ENCODE measurements at regions of chr1 and their contacts with region 1.

Region 1: GRCh38 chr1:31955917-31956736 is 18.0 kb upstream of the PTP4A2 start:
- DNase-seq: peak; percentile 94
- H3K4me3 Mint-ChIP-seq: peak overlapping the region; percentile 55
- H3K27ac Mint-ChIP-seq: peak overlapping the region; percentile 90
- H3K4me1 Mint-ChIP-seq: peaks cover 59% of the 10 kb centered on the region
- H3K27me3 Mint-ChIP-seq: no peaks in the 10 kb centered on the region

Region 2: DNA sequence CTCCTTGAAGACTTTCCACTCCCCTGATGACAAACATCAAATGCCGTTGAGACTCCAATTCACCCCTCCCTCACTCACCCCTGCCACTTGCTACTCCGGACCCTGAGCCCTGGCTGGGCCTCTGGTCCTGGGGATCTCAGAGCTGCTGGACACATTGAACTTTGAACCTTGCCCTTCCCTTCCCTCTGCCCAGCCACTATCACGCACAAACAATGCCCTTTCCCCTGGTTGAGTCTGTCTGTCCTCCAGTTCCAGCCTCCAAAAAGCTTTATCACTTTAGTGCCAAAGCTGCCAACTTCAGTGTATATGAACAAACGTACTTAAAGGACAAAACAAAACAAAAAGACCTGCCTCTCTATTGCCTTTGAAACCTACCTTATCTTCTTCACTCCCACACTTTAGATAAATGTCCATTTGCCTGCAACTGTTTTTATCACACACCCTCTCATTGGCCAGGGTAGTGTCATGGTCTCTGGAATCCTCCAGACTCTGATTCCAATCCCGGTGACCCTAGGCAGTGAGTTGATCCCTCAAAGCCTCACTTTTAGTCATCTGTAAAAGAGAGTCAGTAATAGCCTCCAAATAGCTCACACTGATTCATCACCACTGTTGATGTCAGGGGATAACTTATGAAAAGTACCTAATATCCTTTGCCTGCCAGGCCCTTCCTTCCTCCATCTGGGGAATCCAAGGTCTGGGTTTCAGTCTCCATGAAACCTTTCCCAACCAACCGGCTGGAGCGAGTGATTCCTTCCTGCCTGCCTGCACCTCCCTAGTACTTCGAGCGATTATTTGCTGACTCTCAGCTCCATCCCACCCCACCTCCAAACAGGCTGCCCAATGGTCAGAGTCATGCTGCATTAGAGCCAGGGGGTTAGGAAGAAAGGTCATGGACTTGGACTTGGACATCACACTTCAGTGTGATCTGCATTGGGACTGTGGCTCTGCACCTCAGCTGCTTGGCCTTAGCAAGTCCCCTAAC is 124.4 kb before region 1 on chr1:
- CTCF ChIA-PET with region 1: no interaction called
- POLR2A ChIA-PET with region 1: no interaction called
- intact Hi-C with region 1: loop called (anchors 5 kb)
- DNase-seq: no peak
- H3K4me3 Mint-ChIP-seq: no peak overlapping the region
- H3K27ac Mint-ChIP-seq: no peak overlapping the region
- H3K4me1 Mint-ChIP-seq: peaks cover 17% of the 10 kb centered on the region
- H3K27me3 Mint-ChIP-seq: no peaks in the 10 kb centered on the region

Region 3: GRCh38 chr1:31910933-31911332 is 45.2 kb before region 1 on chr1:
- CTCF ChIA-PET with region 1: interaction called, 9 read pairs
- POLR2A ChIA-PET with region 1: interaction called, 6 read pairs
- intact Hi-C with region 1: loop called (anchors 1 kb)
- DNase-seq: peak; percentile 49
- H3K4me3 Mint-ChIP-seq: no peak overlapping the region
- H3K27ac Mint-ChIP-seq: peak overlapping the region; percentile 69
- H3K4me1 Mint-ChIP-seq: peaks cover 51% of the 10 kb centered on the region
- H3K27me3 Mint-ChIP-seq: no peaks in the 10 kb centered on the region

Region 4: DNA sequence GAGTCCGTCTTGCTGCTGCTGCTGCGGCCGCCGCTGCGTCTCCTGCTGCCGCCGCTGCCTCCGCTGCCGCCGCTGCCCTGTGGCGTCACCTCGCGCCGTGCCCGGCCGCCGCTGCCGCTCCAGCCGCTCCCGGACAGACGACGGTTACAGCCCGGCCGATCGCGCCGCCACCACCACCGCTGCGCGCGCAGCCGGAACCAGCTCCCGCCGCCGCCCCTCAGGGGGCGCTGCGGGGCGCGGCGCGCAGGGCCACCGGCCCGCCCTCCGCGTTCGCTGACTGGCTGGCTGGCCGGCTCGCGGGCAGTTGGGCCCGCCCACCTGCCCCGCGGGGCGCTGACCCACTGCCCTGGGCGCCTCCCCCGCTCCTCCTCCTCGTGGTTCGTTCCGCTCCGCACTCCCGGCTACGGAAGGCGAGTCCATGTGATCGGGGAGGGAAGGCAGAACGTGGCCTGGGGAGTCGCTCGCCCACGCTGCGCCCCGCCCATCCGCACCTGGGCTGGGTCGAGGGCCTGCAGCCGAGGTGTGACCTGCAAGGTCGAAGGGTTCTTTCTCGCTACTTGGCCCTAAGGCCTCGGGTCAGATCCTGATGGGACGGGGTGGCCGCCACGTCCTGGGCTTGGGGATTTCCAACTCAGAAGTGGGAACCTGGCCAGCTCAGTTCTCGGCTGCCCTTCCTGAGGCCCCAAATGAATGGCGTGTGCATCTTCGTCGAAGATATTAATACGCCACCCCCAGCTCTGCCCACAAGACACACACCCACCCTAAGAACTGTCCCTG is 17.8 kb before region 1 on chr1 and contains the start of gene PTP4A2:
- CTCF ChIA-PET with region 1: interaction called, 487 read pairs
- POLR2A ChIA-PET with region 1: interaction called, 130 read pairs
- intact Hi-C with region 1: loop called (anchors 1 kb)
- DNase-seq: peak; percentile 94
- H3K4me3 Mint-ChIP-seq: peak within 1 kb of the TSS; percentile 98
- H3K27ac Mint-ChIP-seq: peak within 1 kb of the TSS; percentile 96
- H3K4me1 Mint-ChIP-seq: peaks cover 66% of the 10 kb centered on the region
- H3K27me3 Mint-ChIP-seq: no peaks in the 10 kb centered on the region
- total RNA-seq, gene PTP4A2: 275 to 285 TPM

Measured in activated CD4-positive, alpha-beta memory T cell treated with anti-CD3 and anti-CD28 coated beads for 36 hours (primary cell).